Activated T-helper 2 cell treated with anti-CD3 and anti-CD28 coated beads, Interferon-gamma antibody, Interleukin-2, Interleukin-4, amounts not matched to agents 10 μg/mL and 5 μg/mL and 100 μg/mL, durations not matched to agents 14 hours and 24 hours and 36 hours (primary cell): ENCODE measurements at regions of chr13 and their contacts with region 1.

Region 1: GRCh38 chr13:49495783-49496762 is at the start of gene PHF11:
- DNase-seq: peak; percentile 84
- H3K4me3 Mint-ChIP-seq: peak within 1 kb of the TSS; percentile 91
- H3K27ac Mint-ChIP-seq: peak within 1 kb of the TSS; percentile 97
- H3K4me1 Mint-ChIP-seq: peaks cover 50% of the 10 kb centered on the region
- H3K27me3 Mint-ChIP-seq: no peaks in the 10 kb centered on the region
- total RNA-seq, gene PHF11: 47.9 and 52.9 TPM in 2 replicates

Region 2: DNA sequence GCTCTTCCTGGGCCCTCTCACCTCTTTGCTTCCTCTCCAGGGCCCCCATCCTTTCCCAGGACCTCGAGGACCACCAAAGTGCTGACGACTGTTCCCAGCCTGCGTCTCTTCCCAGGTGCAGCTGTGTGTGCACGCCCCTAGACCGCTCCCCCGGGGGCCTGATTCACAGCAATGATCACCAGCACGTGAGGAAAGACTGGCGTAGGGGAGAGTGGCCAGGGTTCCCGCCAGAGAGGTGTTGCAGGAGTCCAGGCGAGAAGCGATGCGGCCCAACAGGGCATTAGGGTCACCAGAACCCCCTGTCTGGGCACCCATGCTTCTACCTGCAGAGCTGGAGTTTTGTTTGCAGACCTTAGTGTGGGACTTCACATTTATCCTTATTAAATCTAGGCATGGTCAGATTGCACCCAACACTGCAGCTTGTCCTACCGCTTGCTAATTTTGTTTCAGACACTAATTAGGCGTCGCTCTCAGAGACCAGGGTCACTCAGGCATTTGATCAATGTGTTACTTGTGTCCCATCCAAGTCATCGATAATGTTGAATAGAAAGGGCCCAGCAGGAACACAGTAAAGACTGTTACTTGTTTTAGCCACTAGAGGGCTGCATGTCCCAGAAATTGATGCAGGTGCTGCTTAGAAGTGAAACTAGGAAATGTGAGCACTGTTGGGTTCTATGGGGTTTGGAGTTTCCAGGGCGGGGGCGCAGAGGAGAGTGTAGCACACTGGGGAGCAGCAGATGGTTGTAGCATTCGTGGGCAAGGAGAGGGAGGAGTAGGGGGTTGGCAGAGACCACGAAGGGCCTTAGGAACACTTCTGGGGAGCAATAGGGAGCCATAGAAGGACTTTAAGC is 195.1 kb before region 1 on chr13:
- intact Hi-C with region 1: loop called (anchors 1 kb)
- DNase-seq: peak; percentile 63
- H3K4me3 Mint-ChIP-seq: peak overlapping the region; percentile 24
- H3K27ac Mint-ChIP-seq: peak overlapping the region; percentile 47
- H3K4me1 Mint-ChIP-seq: peaks cover 12% of the 10 kb centered on the region
- H3K27me3 Mint-ChIP-seq: no peaks in the 10 kb centered on the region

Region 3: GRCh38 chr13:49540552-49540951 is 44.5 kb after region 1 on chr13:
- intact Hi-C with region 1: loop called (anchors 2 kb)
- DNase-seq: no peak
- H3K4me3 Mint-ChIP-seq: peak overlapping the region; percentile 43
- H3K27ac Mint-ChIP-seq: peak overlapping the region; percentile 48
- H3K4me1 Mint-ChIP-seq: peaks cover 19% of the 10 kb centered on the region
- H3K27me3 Mint-ChIP-seq: no peaks in the 10 kb centered on the region

Region 4: DNA sequence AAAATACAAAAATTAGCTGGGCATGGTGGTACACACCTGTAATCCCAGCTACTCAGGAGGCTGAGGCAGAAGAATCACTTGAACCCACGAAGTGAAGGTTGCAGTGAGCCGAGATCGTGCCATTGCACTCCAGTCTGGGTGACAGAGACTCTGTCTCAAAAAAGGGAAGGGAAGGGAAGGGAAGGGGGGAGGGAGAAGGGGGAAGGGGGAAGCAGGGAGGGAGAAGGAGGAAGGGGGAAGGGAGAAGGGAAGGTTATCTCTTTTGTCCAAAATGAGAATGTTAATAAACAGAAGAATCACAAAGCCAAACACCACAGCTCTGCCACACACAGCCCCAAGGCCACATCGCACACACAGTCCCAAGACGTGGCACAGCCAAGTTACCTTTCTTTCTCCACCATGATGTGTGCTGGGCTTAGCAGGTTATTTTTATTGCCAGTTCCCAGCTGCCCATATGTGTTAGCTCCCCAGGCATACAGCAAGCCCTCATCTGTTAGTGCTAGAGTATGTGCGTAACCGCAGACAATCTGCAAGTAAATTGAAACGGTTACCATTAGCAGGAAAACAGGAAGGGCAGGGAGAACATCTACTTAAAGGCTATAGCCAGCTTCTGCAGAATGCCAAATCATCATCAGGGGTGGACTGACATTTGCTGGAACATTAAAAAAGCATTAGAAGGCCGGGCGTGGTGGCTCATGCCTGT is 55.0 kb after region 1 on chr13:
- intact Hi-C with region 1: no loop called
- DNase-seq: no peak
- H3K4me3 Mint-ChIP-seq: no peak overlapping the region
- H3K27ac Mint-ChIP-seq: no peak overlapping the region
- H3K4me1 Mint-ChIP-seq: no peaks in the 10 kb centered on the region
- H3K27me3 Mint-ChIP-seq: no peaks in the 10 kb centered on the region

Region 5: GRCh38 chr13:49585220-49586157 is 89.4 kb after region 1 on chr13 and contains the start of gene RCBTB1:
- intact Hi-C with region 1: loop called (anchors 5 kb)
- DNase-seq: peak; percentile 68
- H3K4me3 Mint-ChIP-seq: peak within 1 kb of the TSS; percentile 99
- H3K27ac Mint-ChIP-seq: peak within 1 kb of the TSS; percentile 96
- H3K4me1 Mint-ChIP-seq: peaks cover 33% of the 10 kb centered on the region
- H3K27me3 Mint-ChIP-seq: peaks cover 2% of the 10 kb centered on the region
- total RNA-seq, gene RCBTB1: 13.5 and 16.0 TPM in 2 replicates

Region 6: DNA sequence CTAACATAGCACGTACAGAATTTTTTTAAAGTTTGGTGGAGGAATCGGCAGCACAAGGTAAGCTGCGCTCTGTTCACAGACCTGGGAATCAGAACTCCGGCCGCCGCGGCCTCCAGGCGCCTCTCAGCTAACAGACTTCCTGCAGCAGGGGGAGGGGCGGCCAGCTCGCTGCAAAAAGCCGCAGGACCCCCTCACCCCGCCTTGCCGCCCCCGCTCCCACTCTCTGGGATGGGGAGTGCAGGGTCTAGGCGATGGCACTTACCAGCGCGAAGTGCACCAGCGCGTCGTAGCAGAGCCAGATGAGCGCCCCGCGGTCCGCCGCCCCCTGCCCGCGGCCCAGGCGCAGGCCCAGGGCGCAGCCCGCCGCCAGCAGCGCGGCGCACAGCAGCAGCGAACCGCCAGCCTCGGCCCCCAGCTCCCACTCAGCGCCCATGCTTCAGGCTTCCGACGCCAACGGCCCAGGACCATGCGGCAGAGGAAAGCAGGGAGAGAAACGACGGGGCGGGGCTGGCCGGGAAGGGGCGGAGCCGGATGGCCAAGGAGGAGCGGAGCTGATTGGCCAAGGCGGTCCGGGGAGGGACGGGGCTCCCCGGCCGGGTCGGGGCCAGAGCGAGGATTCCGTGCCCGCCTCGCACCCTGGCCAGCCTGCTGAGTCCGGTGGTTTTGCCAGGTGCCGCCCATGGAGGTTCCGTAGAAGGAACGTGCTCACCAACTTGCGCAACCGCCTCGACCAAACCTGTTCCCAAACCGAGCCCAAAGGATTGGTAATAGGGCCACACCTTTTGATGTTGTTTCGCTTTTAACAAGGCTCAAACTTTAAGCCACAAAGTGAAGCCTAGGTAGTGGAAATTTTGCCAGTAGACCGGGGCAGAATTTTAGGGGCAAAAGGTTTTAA is 195.2 kb after region 1 on chr13 and contains the start of gene EBPL:
- intact Hi-C with region 1: no loop called
- DNase-seq: peak; percentile 81
- H3K4me3 Mint-ChIP-seq: peak within 1 kb of the TSS; percentile 94
- H3K27ac Mint-ChIP-seq: peak within 1 kb of the TSS; percentile 67
- H3K4me1 Mint-ChIP-seq: peaks cover 30% of the 10 kb centered on the region
- H3K27me3 Mint-ChIP-seq: no peaks in the 10 kb centered on the region
- total RNA-seq, gene EBPL: 42.7 and 47.5 TPM in 2 replicates